Activated CD4-positive, alpha-beta T cell treated with anti-CD3 and anti-CD28 coated beads for 36 hours (primary cell): ENCODE measurements at regions of chr6 and their contacts with region 1.

Region 1: GRCh38 chr6:46848684-46849360 is 55.6 kb downstream of the MEP1A start:
- DNase-seq: peak; percentile 83
- ATAC-seq: peak; percentile 80
- H3K4me3 Mint-ChIP-seq: peak overlapping the region; percentile 13
- H3K27ac Mint-ChIP-seq: no peak overlapping the region
- H3K4me1 Mint-ChIP-seq: peaks cover 3% of the 10 kb centered on the region
- H3K27me3 Mint-ChIP-seq: peaks cover 22% of the 10 kb centered on the region

Region 2: DNA sequence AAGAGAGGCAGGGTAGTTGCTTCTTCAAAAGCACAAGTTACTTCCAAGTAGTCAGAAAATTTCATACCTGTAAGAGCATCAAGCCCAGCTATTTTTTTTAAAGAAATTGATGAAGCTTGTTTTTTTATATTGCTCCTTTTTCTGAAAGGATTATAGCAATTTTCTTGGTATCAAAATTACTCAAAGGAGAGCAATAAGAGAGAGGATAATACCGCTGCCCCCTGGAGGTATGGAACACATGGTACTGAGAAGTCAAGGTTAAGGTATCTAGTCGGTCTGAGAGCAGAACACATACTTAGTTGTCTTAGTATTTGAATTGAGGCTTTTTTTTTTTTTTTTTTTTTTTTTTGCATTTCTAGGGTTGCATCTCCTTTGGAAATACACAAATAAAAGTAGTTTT is 13.6 kb after region 1 on chr6:
- CTCF ChIA-PET with region 1: interaction called, 14 read pairs
- POLR2A ChIA-PET with region 1: no interaction called
- intact Hi-C with region 1: no loop called
- DNase-seq: peak; percentile 22
- ATAC-seq: no peak
- H3K4me3 Mint-ChIP-seq: no peak overlapping the region
- H3K27ac Mint-ChIP-seq: no peak overlapping the region
- H3K4me1 Mint-ChIP-seq: no peaks in the 10 kb centered on the region
- H3K27me3 Mint-ChIP-seq: peaks cover 13% of the 10 kb centered on the region

Region 3: GRCh38 chr6:46990031-46990644 is 141.3 kb after region 1 on chr6:
- CTCF ChIA-PET with region 1: interaction called, 4 read pairs
- POLR2A ChIA-PET with region 1: no interaction called
- intact Hi-C with region 1: loop called in 1 of 2 experiments (anchors 2 kb)
- DNase-seq: no peak
- ATAC-seq: no peak
- H3K4me3 Mint-ChIP-seq: no peak overlapping the region
- H3K27ac Mint-ChIP-seq: no peak overlapping the region
- H3K4me1 Mint-ChIP-seq: no peaks in the 10 kb centered on the region
- H3K27me3 Mint-ChIP-seq: peaks cover 15% of the 10 kb centered on the region

Region 4: DNA sequence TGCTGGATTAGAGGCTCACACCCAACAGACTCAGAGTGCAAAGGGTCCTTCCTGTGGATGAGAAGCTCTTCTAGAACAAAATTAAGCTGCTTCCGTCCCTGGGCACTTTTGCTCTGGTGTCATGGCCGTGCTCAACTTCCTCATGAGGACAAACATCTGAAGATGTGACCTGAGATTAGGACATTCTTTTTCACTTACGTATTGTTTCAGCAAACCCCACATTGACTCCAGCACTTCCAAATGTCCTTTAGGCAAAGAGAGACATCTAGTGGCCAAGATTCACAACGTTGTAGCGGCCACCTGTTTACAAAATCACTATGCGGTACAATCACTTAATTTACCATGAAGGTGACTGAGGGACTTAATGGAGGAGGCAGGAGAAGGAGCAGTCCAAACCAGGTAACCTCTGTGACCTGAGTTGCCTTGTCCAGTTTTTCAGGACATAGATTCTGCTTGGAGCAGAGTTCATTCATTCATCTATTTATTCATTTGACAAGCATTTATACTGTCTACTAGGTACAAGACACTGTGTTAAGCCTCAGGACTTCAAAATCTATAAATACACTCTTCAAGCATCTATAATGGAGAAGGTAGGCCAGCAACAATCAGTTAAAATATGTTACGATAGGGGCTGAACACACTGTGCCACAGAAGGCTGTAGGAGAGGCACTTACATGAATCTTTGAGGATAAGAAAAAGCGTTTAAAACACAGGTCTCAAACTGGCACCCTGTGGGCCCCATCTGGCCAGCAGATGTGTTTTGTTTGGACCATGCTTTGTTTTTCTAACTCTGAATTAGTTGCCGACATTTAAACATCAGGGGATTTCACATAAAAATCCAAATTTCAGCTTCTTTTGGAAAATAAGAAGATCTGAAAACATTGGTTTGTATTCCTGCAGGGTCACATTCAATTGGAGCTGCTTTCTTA is 198.9 kb after region 1 on chr6:
- CTCF ChIA-PET with region 1: interaction called, 10 read pairs
- POLR2A ChIA-PET with region 1: no interaction called
- intact Hi-C with region 1: loop called (anchors 1 to 2 kb)
- DNase-seq: peak; percentile 42
- ATAC-seq: peak; percentile 72
- H3K4me3 Mint-ChIP-seq: no peak overlapping the region
- H3K27ac Mint-ChIP-seq: no peak overlapping the region
- H3K4me1 Mint-ChIP-seq: peaks cover 2% of the 10 kb centered on the region
- H3K27me3 Mint-ChIP-seq: peaks cover 10% of the 10 kb centered on the region

Region 5: DNA sequence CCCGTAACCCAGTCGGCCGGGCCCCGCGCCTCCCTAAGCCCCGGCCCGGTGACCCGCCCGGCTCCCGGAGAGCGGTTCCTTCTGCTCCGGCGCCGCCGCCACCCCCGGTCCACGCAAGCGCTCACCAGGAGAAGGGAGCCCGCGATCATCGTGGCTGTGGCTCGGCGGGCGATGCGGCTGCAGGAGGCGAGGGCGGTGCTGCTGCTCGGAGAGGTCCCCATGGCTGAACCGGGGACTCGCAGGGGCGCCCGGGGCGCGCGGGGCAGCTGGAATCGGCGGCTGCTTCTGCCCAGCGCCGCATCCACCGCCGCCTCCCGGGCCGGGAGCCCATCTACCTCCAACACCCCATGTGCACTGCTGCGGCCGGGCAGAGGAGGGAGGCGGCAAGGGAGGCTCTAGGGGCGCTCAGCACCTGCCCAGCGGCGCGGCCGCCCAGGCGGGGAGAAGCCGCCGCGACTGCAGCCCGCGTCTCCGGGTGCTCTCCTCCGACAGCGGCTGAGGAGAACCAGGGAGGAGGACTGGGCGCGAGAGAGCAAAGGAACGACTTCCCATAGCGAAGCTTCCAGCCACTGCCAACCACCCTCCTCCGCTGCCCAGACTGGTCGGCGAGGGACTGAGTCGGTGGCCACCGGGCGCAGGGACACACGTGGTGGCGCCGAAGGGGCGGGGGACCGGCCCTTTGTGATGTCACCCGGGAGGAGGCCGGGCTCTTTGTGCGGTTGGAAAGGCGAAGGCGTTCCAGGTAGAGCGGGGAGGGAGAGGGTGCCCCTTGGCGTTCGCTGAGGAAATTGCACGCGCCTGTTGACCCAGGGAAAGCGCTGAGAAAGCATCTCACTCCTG is 460.7 kb after region 1 on chr6 and contains the start of gene TNFRSF21:
- CTCF ChIA-PET with region 1: interaction called, 3 read pairs
- POLR2A ChIA-PET with region 1: interaction called, 3 read pairs
- intact Hi-C with region 1: loop called (anchors 1 kb)
- DNase-seq: peak; percentile 93
- ATAC-seq: peak; percentile 97
- H3K4me3 Mint-ChIP-seq: peak within 1 kb of the TSS; percentile 66
- H3K27ac Mint-ChIP-seq: peak within 1 kb of the TSS; percentile 42
- H3K4me1 Mint-ChIP-seq: peaks cover 9% of the 10 kb centered on the region
- H3K27me3 Mint-ChIP-seq: peaks cover 33% of the 10 kb centered on the region
- total RNA-seq, gene TNFRSF21: 2.6 to 2.8 TPM

Region 6: GRCh38 chr6:47822856-47823554 is 974.2 kb after region 1 on chr6:
- CTCF ChIA-PET with region 1: no interaction called
- POLR2A ChIA-PET with region 1: no interaction called
- intact Hi-C with region 1: no loop called
- DNase-seq: no peak
- ATAC-seq: no peak
- H3K4me3 Mint-ChIP-seq: no peak overlapping the region
- H3K27ac Mint-ChIP-seq: no peak overlapping the region
- H3K4me1 Mint-ChIP-seq: no peaks in the 10 kb centered on the region
- H3K27me3 Mint-ChIP-seq: peaks cover 16% of the 10 kb centered on the region